K562 (cell line): ENCODE measurements at regions of chr17 and their contacts with region 1.

Region 1: GRCh38 chr17:30344283-30345088 is 10.6 kb upstream of the TMIGD1 start:
- DNase-seq: peak; percentile 16 to 59 (median 30)
- ATAC-seq: peak; percentile 84
- H3K4me3 ChIP-seq: no peak overlapping the region
- H3K27ac ChIP-seq: peak overlapping the region; percentile 30; the same call in 2 of the 3 replicates
- H3K4me1 ChIP-seq: peaks cover 8 to 33% of the 10 kb centered on the region in 2 experiments; a peak in 4 of 5 replicates
- H3K27me3 ChIP-seq: no peaks in the 10 kb centered on the region
- CTCF ChIP-seq: no peak
- EP300 ChIP-seq: peak; percentile 79
- POLR2A ChIP-seq: no peak
- RAD21 ChIP-seq: 0 out of 4 replicates have a peak, but pooled peaks of 1 of the 2 experiments have one; percentile 14

Region 2: GRCh38 chr17:30378824-30379302 is 34.4 kb after region 1 on chr17 and contains the start of gene CPD:
- CTCF ChIA-PET with region 1: no interaction called
- POLR2A ChIA-PET with region 1: interaction called, 3 read pairs
- in situ Hi-C with region 1: no loop called
- intact Hi-C with region 1: loop called (anchors 2 kb)
- DNase-seq: peak; percentile 97 to 100 (median 99)
- ATAC-seq: peak; percentile 97
- H3K4me3 ChIP-seq: peak within 1 kb of the TSS; percentile 72
- H3K27ac ChIP-seq: peak within 1 kb of the TSS; percentile 42
- H3K4me1 ChIP-seq: peaks cover 21 to 33% of the 10 kb centered on the region in 2 experiments
- H3K27me3 ChIP-seq: no peaks in the 10 kb centered on the region
- CTCF ChIP-seq: no peak
- EP300 ChIP-seq: no peak
- POLR2A ChIP-seq: peak; percentile 81
- RAD21 ChIP-seq: no peak
- polyA plus RNA-seq, gene CPD: 4.5 to 4.9 TPM

Region 3: DNA sequence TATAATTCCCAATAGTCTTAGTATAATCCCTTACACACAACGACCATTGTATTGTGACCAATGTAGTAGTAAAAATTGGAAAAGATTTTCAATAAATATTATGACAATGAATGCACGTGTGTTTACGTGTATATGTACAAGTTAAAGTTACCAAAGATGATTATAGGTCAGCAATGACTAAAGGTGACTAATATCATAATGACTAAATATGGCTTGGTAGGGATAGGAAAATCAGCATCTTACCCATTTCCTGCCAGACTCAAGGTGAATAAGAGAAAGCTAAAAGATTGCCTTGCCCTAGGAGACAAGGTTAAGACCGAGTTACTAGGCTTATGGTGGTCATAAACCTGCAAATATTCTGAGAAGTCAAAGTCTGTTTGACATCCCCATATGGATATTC is 68.6 kb after region 1 on chr17:
- CTCF ChIA-PET with region 1: no interaction called
- POLR2A ChIA-PET with region 1: no interaction called
- in situ Hi-C with region 1: no loop called
- intact Hi-C with region 1: no loop called
- DNase-seq: no peak
- ATAC-seq: no peak
- H3K4me3 ChIP-seq: no peak overlapping the region
- H3K27ac ChIP-seq: no peak overlapping the region
- H3K4me1 ChIP-seq: no peaks in the 10 kb centered on the region; a peak in 1 of 5 replicates
- H3K27me3 ChIP-seq: no peaks in the 10 kb centered on the region
- CTCF ChIP-seq: no peak
- EP300 ChIP-seq: no peak
- POLR2A ChIP-seq: no peak
- RAD21 ChIP-seq: no peak

Region 4: GRCh38 chr17:30433514-30433913 is 89.0 kb after region 1 on chr17:
- CTCF ChIA-PET with region 1: no interaction called
- POLR2A ChIA-PET with region 1: no interaction called
- in situ Hi-C with region 1: no loop called
- intact Hi-C with region 1: no loop called
- DNase-seq: peak in 2 of 4 experiments; percentile 49 to 66
- ATAC-seq: peak; percentile 75
- H3K4me3 ChIP-seq: no peak overlapping the region
- H3K27ac ChIP-seq: peak overlapping the region; percentile 26; the same call in 2 of the 3 replicates
- H3K4me1 ChIP-seq: peaks cover 0 to 6% of the 10 kb centered on the region in 2 experiments; a peak in 2 of 5 replicates
- H3K27me3 ChIP-seq: no peaks in the 10 kb centered on the region
- CTCF ChIP-seq: no peak
- EP300 ChIP-seq: no peak
- POLR2A ChIP-seq: no peak
- RAD21 ChIP-seq: no peak

Region 5: DNA sequence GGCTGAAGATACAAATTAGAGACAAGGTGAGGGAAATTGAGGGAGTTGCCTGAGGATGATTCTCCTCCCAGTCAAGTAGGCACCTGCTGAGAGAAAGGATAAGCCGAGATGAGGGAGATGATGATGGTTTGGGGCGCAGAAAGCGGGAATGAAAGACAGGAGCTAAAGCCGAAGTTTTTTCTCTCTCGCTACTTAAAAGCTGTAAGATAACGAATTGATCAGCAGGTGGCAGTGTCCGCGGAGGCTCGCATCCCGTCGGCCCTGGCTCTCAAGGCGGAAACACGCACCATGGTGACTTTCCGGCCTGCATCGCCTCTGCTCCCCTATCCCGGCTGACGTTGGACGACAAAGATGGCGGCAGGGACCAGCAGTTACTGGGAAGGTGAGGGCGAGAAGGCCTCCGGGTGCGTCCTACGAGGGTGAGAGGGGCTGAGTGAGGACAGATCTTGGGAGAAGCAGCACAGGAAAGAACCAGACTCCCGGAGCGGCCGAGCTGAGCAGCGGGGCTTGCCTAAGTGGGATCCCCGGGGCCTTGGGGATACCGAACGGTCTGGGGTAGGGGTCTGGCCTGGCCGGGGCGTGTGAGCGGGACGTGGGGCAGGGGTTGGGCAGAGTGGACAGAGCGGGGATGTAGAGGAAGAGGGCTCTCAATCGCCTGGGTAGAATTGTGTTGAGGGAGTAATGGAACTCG is 132.7 kb after region 1 on chr17 and contains the start of gene GOSR1:
- CTCF ChIA-PET with region 1: interaction called, 3 read pairs
- POLR2A ChIA-PET with region 1: no interaction called
- in situ Hi-C with region 1: no loop called
- intact Hi-C with region 1: loop called (anchors 5 kb)
- DNase-seq: peak; percentile 86 to 97 (median 88)
- ATAC-seq: peak; percentile 99
- H3K4me3 ChIP-seq: peak within 1 kb of the TSS; percentile 91
- H3K27ac ChIP-seq: peak within 1 kb of the TSS; percentile 92
- H3K4me1 ChIP-seq: peaks cover 0 to 15% of the 10 kb centered on the region in 2 experiments; a peak in 3 of 5 replicates
- H3K27me3 ChIP-seq: no peaks in the 10 kb centered on the region
- CTCF ChIP-seq: peak; percentile 77 to 92 (median 91)
- EP300 ChIP-seq: no peak; the same call in 1 of the 2 replicates
- POLR2A ChIP-seq: peak; percentile 98
- RAD21 ChIP-seq: peak; percentile 22 to 58; a peak in 3 of 4 replicates
- polyA plus RNA-seq, gene GOSR1: 56.7 to 95.5 TPM

Region 6: DNA sequence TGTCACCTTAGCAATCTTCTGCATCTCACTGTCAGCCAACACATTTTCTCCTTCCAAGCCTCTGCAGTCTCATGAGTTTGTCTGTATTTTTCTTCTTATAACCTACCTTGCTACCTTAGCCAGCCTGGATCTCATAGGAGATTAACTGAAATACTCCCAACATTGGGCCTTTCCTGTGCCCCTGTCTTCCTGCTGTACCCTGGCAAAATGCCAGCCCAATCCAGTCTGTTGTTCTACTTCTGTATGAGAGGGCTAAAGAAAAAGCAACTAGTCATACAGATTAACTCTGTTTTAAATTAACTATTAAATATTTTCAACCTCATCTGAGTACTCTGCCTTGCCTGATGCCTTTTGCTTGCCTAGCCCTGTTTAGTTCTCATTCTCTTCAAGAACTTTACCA is 151.1 kb after region 1 on chr17:
- CTCF ChIA-PET with region 1: no interaction called
- POLR2A ChIA-PET with region 1: no interaction called
- in situ Hi-C with region 1: no loop called
- intact Hi-C with region 1: no loop called
- DNase-seq: no peak
- ATAC-seq: no peak
- H3K4me3 ChIP-seq: no peak overlapping the region
- H3K27ac ChIP-seq: no peak overlapping the region
- H3K4me1 ChIP-seq: no peaks in the 10 kb centered on the region
- H3K27me3 ChIP-seq: no peaks in the 10 kb centered on the region
- CTCF ChIP-seq: no peak
- EP300 ChIP-seq: no peak
- POLR2A ChIP-seq: no peak
- RAD21 ChIP-seq: no peak

Region 7: GRCh38 chr17:30545024-30545423 is 200.5 kb after region 1 on chr17:
- CTCF ChIA-PET with region 1: no interaction called
- POLR2A ChIA-PET with region 1: no interaction called
- in situ Hi-C with region 1: no loop called
- intact Hi-C with region 1: no loop called
- DNase-seq: peak in 1 of 4 experiments; percentile 39
- ATAC-seq: no peak
- H3K4me3 ChIP-seq: no peak overlapping the region
- H3K27ac ChIP-seq: no peak overlapping the region
- H3K4me1 ChIP-seq: peaks cover 3 to 4% of the 10 kb centered on the region in 2 experiments; a peak in 2 of 5 replicates
- H3K27me3 ChIP-seq: peaks cover 31 to 43% of the 10 kb centered on the region in 2 experiments
- CTCF ChIP-seq: no peak
- EP300 ChIP-seq: peak; percentile 13; the same call in 1 of the 2 replicates
- POLR2A ChIP-seq: no peak
- RAD21 ChIP-seq: no peak

Region 8: DNA sequence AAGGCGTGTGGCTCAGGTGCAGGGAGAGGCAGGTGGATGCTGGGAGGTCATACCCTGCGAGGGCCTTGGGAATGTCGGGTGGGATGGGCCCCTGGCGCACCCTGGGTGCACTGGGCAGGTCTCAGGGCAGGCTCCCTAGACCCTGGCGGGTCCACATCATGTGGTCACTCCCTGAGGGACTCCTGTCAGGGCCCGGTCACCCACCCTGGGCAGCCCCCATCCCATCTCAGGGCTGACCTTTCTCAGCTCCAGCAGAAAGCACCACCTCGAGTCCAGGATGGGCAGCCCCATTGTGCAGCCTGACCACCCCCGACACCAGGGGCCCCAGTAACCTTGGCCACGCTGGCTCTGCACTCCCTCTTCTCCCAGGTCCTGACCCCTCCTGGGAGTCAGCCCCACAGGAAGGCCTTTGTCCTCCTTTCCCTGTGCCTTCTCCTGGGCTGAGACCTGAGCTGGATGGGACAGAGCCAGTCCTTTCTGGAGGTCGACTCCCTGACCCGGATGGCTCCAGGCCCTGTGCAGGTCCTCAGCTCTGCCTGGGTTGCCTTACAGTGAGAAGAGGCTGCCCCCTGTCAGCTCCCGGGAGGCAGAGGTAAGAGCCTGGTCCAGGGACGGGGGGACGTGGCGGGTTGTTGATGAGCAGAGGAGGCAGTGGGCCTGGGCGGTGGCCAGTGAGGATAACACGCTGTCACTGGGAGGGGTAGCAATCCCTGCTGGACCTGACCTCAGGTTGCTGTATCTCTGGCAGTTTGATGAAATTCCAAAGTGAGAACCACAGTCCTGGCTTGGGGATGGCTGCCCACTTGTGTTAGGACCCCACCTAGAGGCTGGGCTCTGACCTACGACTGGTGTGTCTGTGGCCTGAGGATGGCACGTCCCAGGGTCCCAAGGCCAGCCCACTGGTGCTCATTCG is 210.6 kb after region 1 on chr17:
- CTCF ChIA-PET with region 1: interaction called, 3 read pairs
- POLR2A ChIA-PET with region 1: no interaction called
- in situ Hi-C with region 1: no loop called
- intact Hi-C with region 1: loop called (anchors 1 kb)
- DNase-seq: peak in 2 of 4 experiments; percentile 22 to 46
- ATAC-seq: peak; percentile 79
- H3K4me3 ChIP-seq: no peak overlapping the region
- H3K27ac ChIP-seq: no peak overlapping the region
- H3K4me1 ChIP-seq: peaks cover 10 to 30% of the 10 kb centered on the region in 2 experiments
- H3K27me3 ChIP-seq: peaks cover 6 to 49% of the 10 kb centered on the region in 2 experiments; a peak in 4 of 5 replicates
- CTCF ChIP-seq: peak; percentile 40 to 63 (median 46); a peak in 5 of 6 replicates
- EP300 ChIP-seq: no peak
- POLR2A ChIP-seq: no peak
- RAD21 ChIP-seq: peak; percentile 19 to 64; a peak in 2 of 4 replicates

Region 9: DNA sequence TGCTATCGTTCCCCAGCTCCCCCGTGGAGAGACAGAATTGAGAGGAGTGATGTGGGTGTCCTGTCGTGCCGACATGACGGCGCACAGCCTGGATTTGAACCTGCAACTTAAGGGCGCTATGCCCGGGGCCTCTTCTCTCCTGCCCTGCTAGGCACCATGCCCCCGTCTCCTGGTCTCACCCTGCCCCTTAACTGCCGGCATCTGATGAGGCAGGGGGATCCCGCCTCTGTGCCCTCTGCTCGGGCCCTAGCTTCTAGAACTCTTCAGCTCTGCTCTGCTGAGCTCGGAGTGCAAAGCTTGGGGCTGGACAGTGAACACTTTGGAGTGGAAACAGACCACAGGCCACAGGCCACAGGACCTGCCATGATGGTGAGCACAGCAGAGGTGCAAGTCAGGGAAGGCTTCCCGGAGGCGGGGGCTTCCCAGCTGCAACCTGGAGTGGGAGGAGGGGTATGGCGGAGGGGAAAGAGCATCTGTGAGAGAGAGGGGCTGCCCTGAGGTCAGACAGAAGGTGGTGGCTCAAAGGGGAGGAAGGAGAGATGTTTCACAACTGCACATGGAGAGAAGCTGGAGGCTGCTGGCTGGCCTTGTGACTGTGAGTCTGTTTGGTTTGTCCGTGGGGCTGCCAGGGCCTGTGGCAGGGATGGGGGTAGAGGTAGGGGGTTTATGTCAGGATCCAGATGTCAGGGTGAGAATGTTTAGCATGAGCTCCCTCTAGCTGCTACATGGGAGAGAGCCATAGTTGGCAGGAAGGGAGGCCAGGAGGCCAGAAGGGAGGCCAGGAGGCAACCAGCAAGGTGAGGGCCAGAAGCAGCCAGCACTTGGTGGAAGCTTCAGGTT is 372.2 kb after region 1 on chr17:
- CTCF ChIA-PET with region 1: interaction called, 3 read pairs
- POLR2A ChIA-PET with region 1: no interaction called
- in situ Hi-C with region 1: loop called (anchors 25 kb)
- intact Hi-C with region 1: loop called (anchors 5 kb)
- DNase-seq: no peak
- ATAC-seq: peak; percentile 15; the same call in 1 of the 3 replicates
- H3K4me3 ChIP-seq: no peak overlapping the region
- H3K27ac ChIP-seq: no peak overlapping the region
- H3K4me1 ChIP-seq: peaks cover 0 to 20% of the 10 kb centered on the region in 2 experiments; a peak in 3 of 5 replicates
- H3K27me3 ChIP-seq: no peaks in the 10 kb centered on the region
- CTCF ChIP-seq: peak; percentile 30 to 36 (median 31); a peak in 5 of 6 replicates
- EP300 ChIP-seq: no peak
- POLR2A ChIP-seq: no peak
- RAD21 ChIP-seq: peak in 1 of 2 experiments; percentile 31; a peak in 2 of 4 replicates